ENCODE measurements at regions of chr17 and their contacts with region 1.

Region 1: GRCh38 chr17:58352014-58352842 is at the start of gene SUPT4H1:
- DNase-seq: peak; percentile 81 to 94 (median 88)
- ATAC-seq: peak; percentile 92 to 96 (median 94)
- H3K4me3 ChIP-seq: peak within 1 kb of the TSS; percentile 83 to 95
- H3K4me3 Mint-ChIP-seq: peak within 1 kb of the TSS; percentile 99 to 100 (median 100)
- H3K27ac ChIP-seq: peak within 1 kb of the TSS; percentile 77
- H3K27ac Mint-ChIP-seq: peak within 1 kb of the TSS; percentile 100
- H3K4me1 ChIP-seq: peaks cover 24 to 35% of the 10 kb centered on the region in 2 experiments
- H3K4me1 Mint-ChIP-seq: peaks cover 54 to 63% (median 59%) of the 10 kb centered on the region in 3 donors
- H3K27me3 ChIP-seq: no peaks in the 10 kb centered on the region
- H3K27me3 Mint-ChIP-seq: no peaks in the 10 kb centered on the region
- total RNA-seq, gene SUPT4H1: 40.5 to 77.3 (median 63.2) TPM

Region 2: DNA sequence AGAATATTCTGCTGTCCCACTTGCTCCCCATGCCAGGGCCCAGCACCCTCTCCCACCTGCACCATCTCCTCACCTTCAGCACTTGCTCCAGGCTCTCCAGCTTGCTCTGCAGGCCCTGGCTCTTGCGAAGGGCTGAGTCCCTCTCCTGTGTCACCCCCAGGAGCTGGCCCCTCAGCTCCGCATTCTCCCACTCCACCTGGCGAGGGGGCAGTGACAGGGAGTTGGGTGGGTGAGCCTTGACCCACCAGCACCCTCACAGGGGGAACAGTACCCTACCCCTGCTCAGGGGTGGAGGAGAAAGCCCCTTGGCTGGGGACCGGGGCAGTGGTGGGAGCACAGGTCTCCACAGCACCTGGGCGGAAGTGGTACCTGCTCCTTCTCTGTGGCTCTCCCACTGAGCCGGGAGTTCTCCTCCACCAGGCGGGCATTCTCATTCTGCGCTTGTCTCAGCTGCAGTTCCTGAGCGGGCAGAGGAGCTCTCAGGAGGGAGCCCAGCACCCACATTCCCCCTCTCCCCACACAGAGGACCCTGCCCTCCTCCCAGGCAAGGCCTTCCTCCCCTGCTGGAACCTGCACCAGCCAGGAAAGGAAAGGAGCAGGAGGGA is 29.5 kb before region 1 on chr17:
- CTCF ChIA-PET with region 1: interaction called, 48 to 191 read pairs
- POLR2A ChIA-PET with region 1: interaction called, 4 to 10 read pairs
- DNase-seq: no peak
- ATAC-seq: no peak
- H3K4me3 ChIP-seq: no peak overlapping the region
- H3K4me3 Mint-ChIP-seq: no peak overlapping the region
- H3K27ac ChIP-seq: no peak overlapping the region
- H3K27ac Mint-ChIP-seq: peak overlapping the region in 1 of 2 donors; percentile 32
- H3K4me1 ChIP-seq: peaks cover 4 to 58% of the 10 kb centered on the region in 2 experiments
- H3K4me1 Mint-ChIP-seq: peaks cover 31 to 38% (median 37%) of the 10 kb centered on the region in 3 donors
- H3K27me3 ChIP-seq: peaks cover 0 to 2% of the 10 kb centered on the region in 2 experiments
- H3K27me3 Mint-ChIP-seq: no peaks in the 10 kb centered on the region

Region 3: GRCh38 chr17:58329035-58329809 is 23.0 kb before region 1 on chr17:
- CTCF ChIA-PET with region 1: interaction called, 7 read pairs
- POLR2A ChIA-PET with region 1: interaction called, 4 to 10 read pairs
- DNase-seq: peak; percentile 49 to 80 (median 62)
- ATAC-seq: peak; percentile 11 to 41 (median 22)
- H3K4me3 ChIP-seq: peak overlapping the region; percentile 57 to 90
- H3K4me3 Mint-ChIP-seq: peak overlapping the region; percentile 99 to 100 (median 100)
- H3K27ac ChIP-seq: peak overlapping the region; percentile 50
- H3K27ac Mint-ChIP-seq: peak overlapping the region; percentile 93 to 96
- H3K4me1 ChIP-seq: peaks cover 13 to 67% of the 10 kb centered on the region in 2 experiments
- H3K4me1 Mint-ChIP-seq: peaks cover 50 to 72% (median 55%) of the 10 kb centered on the region in 3 donors
- H3K27me3 ChIP-seq: no peaks in the 10 kb centered on the region
- H3K27me3 Mint-ChIP-seq: no peaks in the 10 kb centered on the region

Region 4: GRCh38 chr17:58337600-58338453 is 14.4 kb before region 1 on chr17:
- CTCF ChIA-PET with region 1: interaction called, 3 to 32 read pairs
- POLR2A ChIA-PET with region 1: interaction called, 5 to 20 read pairs
- DNase-seq: peak; percentile 78 to 93 (median 88)
- ATAC-seq: peak; percentile 64 to 78 (median 68)
- H3K4me3 ChIP-seq: peak overlapping the region; percentile 90 to 100
- H3K4me3 Mint-ChIP-seq: peak overlapping the region; percentile 99 to 100 (median 100)
- H3K27ac ChIP-seq: peak overlapping the region; percentile 97
- H3K27ac Mint-ChIP-seq: peak overlapping the region; percentile 98 to 99
- H3K4me1 ChIP-seq: peaks cover 47 to 97% of the 10 kb centered on the region in 2 experiments
- H3K4me1 Mint-ChIP-seq: peaks cover 81 to 94% (median 90%) of the 10 kb centered on the region in 3 donors
- H3K27me3 ChIP-seq: no peaks in the 10 kb centered on the region
- H3K27me3 Mint-ChIP-seq: no peaks in the 10 kb centered on the region

Region 5: DNA sequence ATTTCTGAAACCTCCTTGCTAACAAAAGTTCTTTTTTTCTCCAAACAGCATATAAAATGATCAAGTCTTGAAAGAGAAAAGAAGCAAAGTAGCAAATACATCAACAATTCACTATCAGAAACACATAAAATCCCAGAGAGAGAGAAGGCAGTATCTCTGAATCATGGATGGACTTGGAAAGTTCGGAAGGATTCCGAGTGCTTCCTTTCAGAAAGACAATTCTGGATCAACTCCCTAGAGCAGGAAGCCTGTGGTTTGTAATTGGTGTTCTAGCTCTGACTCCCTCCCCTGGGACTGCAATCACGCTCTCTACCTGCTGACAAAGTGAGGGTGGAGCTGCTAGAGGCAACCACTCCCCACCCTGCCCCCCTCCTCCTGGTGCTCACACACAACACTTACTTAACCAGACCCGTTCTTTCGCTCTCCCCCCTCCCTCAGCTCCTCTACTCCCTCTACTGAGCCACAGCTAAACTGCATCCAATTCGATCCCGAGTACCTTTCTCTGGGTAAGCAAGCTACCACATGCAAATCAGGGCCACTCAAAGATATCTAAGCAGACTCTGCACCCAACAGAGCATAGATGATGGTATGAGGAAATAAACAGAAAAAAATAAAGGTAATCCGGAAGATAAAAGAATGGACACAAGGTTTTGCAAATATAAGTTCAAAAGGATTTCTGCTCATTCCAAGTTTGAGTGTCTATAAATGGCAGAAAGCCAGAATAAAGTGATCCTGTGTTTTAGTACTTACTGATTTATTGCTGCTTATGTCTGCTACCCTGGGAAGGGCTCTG is 65.3 kb after region 1 on chr17 and contains the start of gene RNF43:
- CTCF ChIA-PET with region 1: interaction called in 1 of 2 experiments, 16 read pairs
- POLR2A ChIA-PET with region 1: interaction called in 1 of 2 experiments, 4 read pairs
- DNase-seq: peak; percentile 58 to 95 (median 90)
- ATAC-seq: peak; percentile 100
- H3K4me3 ChIP-seq: no peak within 1 kb of the TSS
- H3K4me3 Mint-ChIP-seq: peak within 1 kb of the TSS in 1 of 3 donors; percentile 18
- H3K27ac ChIP-seq: peak within 1 kb of the TSS; percentile 53
- H3K27ac Mint-ChIP-seq: peak within 1 kb of the TSS; percentile 36 to 57
- H3K4me1 ChIP-seq: peaks cover 8 to 12% of the 10 kb centered on the region in 2 experiments
- H3K4me1 Mint-ChIP-seq: peaks cover 13 to 17% (median 16%) of the 10 kb centered on the region in 3 donors
- H3K27me3 ChIP-seq: no peaks in the 10 kb centered on the region
- H3K27me3 Mint-ChIP-seq: no peaks in the 10 kb centered on the region
- total RNA-seq, gene RNF43: 1.2 to 4.0 (median 1.8) TPM